Activated T-helper 1 cell treated with anti-CD3 and anti-CD28 coated beads, Interleukin-12 subunit alpha, Interleukin-12 subunit beta, Interleukin-2, Interleukin-4 antibody, amounts not matched to agents 30 ng/mL and 10 ng/mL and 1 ng/mL, durations not matched to agents 14 hours and 24 hours and 36 hours (primary cell): ENCODE measurements at regions of chr3 and their contacts with region 1.

Region 1: DNA sequence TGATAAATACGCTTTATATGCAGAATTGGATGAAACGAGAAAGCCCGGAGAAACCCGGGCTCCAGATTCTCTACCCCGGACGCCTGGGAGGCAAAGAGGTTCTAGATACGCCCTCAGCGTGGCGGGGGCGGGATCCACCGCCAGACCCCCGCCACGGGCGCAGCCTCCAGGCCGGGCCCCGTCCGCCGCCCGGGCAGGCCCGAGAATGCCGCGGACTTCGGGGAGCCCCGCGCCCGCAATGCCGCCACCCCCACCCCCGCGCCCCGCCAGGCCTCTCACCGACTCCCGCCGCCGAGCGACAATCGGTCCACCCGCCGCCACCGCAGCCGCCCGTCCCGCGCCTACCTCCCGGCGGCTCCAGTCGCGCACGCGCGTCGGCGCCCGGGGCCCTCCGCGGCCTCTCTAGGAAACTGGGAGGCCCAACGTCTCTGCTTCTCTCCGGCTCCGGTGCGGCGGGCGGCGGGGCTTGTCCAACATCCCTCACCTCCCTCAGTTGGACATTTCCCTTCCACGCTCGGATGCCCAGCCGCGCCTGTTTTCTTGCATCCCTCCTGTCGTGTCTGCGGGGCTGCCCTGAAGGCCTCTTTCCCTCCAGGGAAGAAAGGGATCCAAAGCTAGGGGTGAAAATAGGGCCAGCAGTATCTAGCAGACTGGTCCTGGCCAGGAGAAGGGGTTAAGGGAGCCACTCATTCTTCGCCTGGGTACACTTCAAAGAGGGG is at the start of gene ZNF445:
- DNase-seq: peak; percentile 76
- H3K4me3 Mint-ChIP-seq: peak within 1 kb of the TSS; percentile 88
- H3K27ac Mint-ChIP-seq: peak within 1 kb of the TSS; percentile 78
- H3K4me1 Mint-ChIP-seq: peaks cover 24% of the 10 kb centered on the region
- H3K27me3 Mint-ChIP-seq: no peaks in the 10 kb centered on the region
- total RNA-seq, gene ZNF445: 18.7 and 19.3 TPM in 2 replicates

Region 2: DNA sequence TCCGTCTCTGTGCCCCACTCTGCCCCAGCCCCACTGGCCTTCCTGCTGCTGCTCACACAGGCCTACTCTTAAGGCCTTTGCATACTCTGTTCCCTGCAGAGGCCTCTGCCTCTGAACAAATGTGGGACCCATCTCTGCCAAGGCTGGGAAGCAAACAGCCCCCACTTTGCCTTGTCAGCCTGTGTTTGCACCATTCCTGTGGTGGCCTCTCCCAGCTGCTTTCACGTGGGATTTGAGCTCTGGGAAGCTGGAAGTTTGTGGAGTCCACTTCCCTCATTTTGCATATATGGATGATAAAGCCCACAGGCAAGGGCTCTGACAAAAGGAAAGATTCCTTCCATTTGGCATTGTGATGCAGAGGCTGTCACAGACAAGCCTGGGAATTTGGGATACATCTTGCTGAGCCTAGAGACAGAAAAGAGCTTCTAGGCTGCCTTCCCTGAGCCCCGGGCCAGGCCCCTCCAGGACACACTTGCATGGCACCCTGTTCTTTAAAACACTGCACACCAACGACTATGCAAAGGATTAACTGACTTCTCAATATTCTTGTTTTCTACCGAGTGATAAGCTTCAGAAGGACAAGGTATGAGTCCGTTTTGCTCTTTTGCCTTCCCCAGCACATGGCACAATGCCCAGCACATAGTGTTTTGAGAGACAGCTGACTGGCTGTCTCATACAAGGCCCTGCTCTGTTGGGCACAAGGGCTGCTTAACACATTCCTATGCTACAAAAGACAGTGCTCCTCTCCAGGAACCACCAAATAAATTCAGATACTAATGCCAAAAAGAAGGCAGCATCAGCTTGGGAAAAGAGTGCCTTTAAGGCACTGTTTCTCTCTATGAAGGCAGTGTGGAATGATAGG is 356.5 kb before region 1 on chr3:
- intact Hi-C with region 1: no loop called
- DNase-seq: no peak
- H3K4me3 Mint-ChIP-seq: no peak overlapping the region
- H3K27ac Mint-ChIP-seq: no peak overlapping the region
- H3K4me1 Mint-ChIP-seq: no peaks in the 10 kb centered on the region
- H3K27me3 Mint-ChIP-seq: peaks cover 27% of the 10 kb centered on the region

Region 3: GRCh38 chr3:44323341-44323955 is 154.0 kb before region 1 on chr3:
- intact Hi-C with region 1: loop called (anchors 1 kb)
- DNase-seq: peak; percentile 22
- H3K4me3 Mint-ChIP-seq: no peak overlapping the region
- H3K27ac Mint-ChIP-seq: no peak overlapping the region
- H3K4me1 Mint-ChIP-seq: no peaks in the 10 kb centered on the region
- H3K27me3 Mint-ChIP-seq: peaks cover 23% of the 10 kb centered on the region

Region 4: DNA sequence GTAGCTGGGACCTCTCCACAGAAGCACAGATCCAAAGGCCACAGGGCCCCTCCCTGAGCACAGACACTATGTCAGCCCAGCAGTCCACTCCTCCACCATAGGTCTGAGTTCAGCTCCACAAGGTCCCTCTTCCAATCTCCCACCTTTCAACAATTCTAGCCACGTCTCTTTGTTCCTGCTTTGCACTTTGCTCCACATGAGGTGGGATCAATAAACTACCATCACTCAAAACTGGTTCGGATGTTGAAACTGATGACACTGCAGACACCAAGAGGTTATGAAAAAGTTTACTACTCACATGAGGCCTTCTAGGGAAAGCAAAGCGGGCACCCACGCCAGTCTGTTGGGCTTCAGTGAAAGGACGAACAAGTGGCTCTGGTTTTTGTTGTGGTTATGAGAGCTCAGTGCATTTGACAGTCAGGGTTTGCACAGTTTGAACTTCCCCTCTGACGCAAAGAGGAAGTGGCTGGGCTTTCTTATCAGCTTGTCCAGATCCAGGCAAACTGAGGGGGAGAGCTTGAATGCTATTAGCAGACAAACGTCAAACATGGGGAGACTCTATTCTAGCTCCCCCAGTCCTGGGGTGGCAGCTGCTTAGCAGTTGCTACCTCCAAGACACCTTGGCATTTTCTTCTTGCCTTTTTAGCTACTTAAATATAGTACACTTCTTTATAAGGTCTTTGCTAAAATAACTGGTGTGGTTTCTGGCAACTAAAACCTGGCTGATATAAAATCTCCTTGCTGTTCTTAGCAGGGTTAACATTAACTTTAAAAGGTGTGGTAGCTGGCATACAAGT is 37.8 kb before region 1 on chr3:
- intact Hi-C with region 1: loop called (anchors 1 kb)
- DNase-seq: peak; percentile 69
- H3K4me3 Mint-ChIP-seq: peak overlapping the region; percentile 65
- H3K27ac Mint-ChIP-seq: peak overlapping the region; percentile 84
- H3K4me1 Mint-ChIP-seq: peaks cover 46% of the 10 kb centered on the region
- H3K27me3 Mint-ChIP-seq: no peaks in the 10 kb centered on the region